ENCODE measurements at regions of chr7 and their contacts with region 1.

Region 1: DNA sequence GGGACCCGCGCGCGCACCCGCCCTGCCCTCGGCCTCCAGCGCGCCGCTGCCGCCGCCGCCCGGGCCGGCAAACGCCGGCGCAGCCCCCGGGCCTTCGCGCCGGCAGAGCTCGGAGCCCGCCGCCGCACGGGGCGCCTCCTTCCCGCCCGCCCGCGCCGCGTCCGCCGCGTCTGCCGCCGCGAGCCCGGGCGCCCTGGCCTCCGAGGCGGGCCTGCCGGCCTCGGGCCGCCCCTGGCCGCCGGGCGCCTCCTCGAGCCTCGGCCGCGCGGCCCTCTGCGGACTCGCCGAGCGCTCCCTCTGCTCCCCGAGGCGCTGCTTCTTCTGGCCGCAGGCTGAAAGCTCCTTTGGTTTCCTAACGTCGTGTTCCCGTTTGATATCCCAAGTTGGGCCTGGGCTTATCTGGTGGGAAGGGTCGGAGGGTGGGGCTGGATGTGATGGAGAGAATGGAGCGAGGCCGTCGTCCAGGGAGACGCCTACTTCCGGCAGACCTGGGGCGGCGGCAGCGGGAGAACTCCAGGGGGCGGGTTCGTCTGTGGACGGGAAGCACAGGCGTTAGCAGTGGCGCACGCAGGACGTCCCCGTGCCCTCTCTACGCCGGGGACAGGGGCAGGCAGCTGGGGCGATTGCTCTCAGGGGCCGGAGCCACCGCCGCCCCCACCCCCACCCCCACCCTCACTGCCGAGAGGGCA is 221.0 kb downstream of the PHTF2 start:
- DNase-seq: peak; percentile 92 to 95 (median 94)
- H3K4me3 ChIP-seq: peak overlapping the region; percentile 58
- H3K27ac ChIP-seq: peak overlapping the region; percentile 92 to 99
- H3K4me1 ChIP-seq: peaks cover 5% of the 10 kb centered on the region
- H3K27me3 ChIP-seq: no peaks in the 10 kb centered on the region
- CTCF ChIP-seq: peak in 2 of 3 donors; percentile 7 to 18
- EP300 ChIP-seq: no peak
- POLR2A ChIP-seq: peak; percentile 84

Region 2: DNA sequence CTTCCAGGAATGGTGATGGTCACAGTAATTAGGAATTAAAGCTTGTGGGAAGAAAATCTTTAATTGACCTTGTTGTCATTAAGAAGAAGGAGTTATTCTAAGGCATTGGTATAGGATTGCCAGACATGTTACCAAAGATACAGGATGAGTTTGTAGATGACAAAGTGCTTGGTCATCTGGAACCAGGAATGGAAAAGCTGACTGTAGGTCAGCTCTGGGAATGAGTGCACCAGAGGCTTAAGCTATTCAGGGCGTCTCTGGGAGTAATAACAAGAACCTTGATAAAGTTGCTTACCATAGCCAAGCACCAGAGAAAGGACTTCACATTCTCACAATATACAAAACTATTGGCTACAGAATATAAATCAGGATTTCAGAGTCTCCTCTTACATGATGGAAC is 132.0 kb before region 1 on chr7:
- intact Hi-C with region 1: no loop called
- DNase-seq: no peak
- H3K4me3 ChIP-seq: no peak overlapping the region
- H3K27ac ChIP-seq: no peak overlapping the region
- H3K4me1 ChIP-seq: no peaks in the 10 kb centered on the region
- H3K27me3 ChIP-seq: no peaks in the 10 kb centered on the region
- CTCF ChIP-seq: no peak
- EP300 ChIP-seq: no peak
- POLR2A ChIP-seq: no peak

Region 3: GRCh38 chr7:79176859-79177477 is 1157.4 kb after region 1 on chr7:
- intact Hi-C with region 1: loop called in 1 of 4 experiments (anchors 5 kb)
- DNase-seq: peak in 1 of 5 donors; percentile 16
- H3K4me3 ChIP-seq: no peak overlapping the region
- H3K27ac ChIP-seq: no peak overlapping the region
- H3K4me1 ChIP-seq: no peaks in the 10 kb centered on the region
- H3K27me3 ChIP-seq: no peaks in the 10 kb centered on the region
- CTCF ChIP-seq: peak; percentile 28 to 54 (median 39)
- EP300 ChIP-seq: no peak
- POLR2A ChIP-seq: no peak

Region 4: DNA sequence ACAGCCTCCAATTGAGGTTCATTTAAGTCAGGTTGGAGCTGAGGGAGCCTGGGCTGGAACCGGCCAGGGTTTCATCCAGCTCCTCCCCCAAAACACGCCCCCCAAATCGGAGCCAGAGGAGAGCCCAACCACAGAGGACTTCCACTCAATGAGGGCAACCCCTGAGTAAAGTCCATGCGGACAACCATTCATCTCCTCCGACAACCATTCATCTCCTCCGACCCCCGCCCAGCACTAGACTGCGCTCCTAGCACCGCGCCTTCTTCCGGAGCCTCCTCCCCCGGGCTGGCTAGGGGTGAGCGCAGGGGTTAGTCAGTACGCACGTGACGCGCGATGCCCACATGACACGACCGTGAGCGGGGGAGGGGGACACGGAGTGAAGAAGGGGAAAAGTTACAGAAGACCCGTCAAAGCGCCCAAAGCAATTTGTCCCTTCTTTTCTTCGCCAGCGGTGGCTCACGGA is 1432.5 kb after region 1 on chr7:
- intact Hi-C with region 1: loop called in 1 of 4 experiments (anchors 5 kb)
- DNase-seq: peak; percentile 89 to 92 (median 90)
- H3K4me3 ChIP-seq: peak overlapping the region; percentile 72
- H3K27ac ChIP-seq: peak overlapping the region; percentile 93 to 98
- H3K4me1 ChIP-seq: peaks cover 3% of the 10 kb centered on the region
- H3K27me3 ChIP-seq: no peaks in the 10 kb centered on the region
- CTCF ChIP-seq: no peak
- EP300 ChIP-seq: peak; percentile 70
- POLR2A ChIP-seq: peak; percentile 83